IMR-90 (cell line): ENCODE measurements at regions of chr3 and their contacts with region 1.

Region 1: GRCh38 chr3:128623762-128624176 is 26.8 kb downstream of the RPN1 start:
- DNase-seq: peak; percentile 85
- ATAC-seq: peak; percentile 47
- H3K4me3 ChIP-seq: no peak overlapping the region
- H3K27ac ChIP-seq: no peak overlapping the region
- H3K4me1 ChIP-seq: peaks cover 6% of the 10 kb centered on the region
- H3K27me3 ChIP-seq: no peaks in the 10 kb centered on the region
- CTCF ChIP-seq: no peak
- POLR2A ChIP-seq: no peak
- RAD21 ChIP-seq: no peak

Region 2: DNA sequence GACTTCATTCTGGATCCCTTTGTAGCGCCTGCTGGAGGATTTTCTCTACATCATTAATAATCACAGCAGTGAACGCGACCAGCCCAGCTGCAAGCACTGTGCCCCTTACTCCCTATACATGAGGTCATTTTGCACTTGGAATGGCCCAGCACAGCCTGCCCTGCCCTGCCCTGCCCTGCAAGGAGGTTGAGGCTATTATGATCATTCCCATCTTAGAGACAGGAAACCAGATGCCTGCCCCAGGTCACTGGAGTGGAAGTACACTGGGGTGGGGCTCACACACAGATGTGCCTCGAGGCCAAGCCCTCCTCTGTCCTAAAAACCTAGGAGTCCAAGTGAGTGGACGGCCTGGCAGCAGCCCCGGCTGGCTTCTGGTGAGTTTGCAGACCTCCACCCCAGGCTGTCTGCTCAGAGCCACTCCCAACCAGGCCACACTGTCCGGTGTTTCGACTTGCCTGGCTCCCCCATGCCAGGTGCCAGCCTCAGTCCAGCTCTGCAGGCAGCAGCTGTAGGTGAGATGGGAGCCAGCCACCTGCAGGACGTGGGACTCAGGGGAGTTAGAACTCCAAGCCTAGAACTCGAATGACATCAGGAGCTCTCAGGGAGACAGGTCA is 601.9 kb before region 1 on chr3:
- CTCF ChIA-PET with region 1: no interaction called
- POLR2A ChIA-PET with region 1: no interaction called
- dilution Hi-C with region 1: no loop called
- in situ Hi-C with region 1: no loop called
- intact Hi-C with region 1: no loop called
- DNase-seq: no peak
- ATAC-seq: no peak
- H3K4me3 ChIP-seq: no peak overlapping the region
- H3K27ac ChIP-seq: no peak overlapping the region
- H3K4me1 ChIP-seq: no peaks in the 10 kb centered on the region
- H3K27me3 ChIP-seq: peaks cover 27% of the 10 kb centered on the region
- CTCF ChIP-seq: no peak
- POLR2A ChIP-seq: no peak
- RAD21 ChIP-seq: no peak

Region 3: DNA sequence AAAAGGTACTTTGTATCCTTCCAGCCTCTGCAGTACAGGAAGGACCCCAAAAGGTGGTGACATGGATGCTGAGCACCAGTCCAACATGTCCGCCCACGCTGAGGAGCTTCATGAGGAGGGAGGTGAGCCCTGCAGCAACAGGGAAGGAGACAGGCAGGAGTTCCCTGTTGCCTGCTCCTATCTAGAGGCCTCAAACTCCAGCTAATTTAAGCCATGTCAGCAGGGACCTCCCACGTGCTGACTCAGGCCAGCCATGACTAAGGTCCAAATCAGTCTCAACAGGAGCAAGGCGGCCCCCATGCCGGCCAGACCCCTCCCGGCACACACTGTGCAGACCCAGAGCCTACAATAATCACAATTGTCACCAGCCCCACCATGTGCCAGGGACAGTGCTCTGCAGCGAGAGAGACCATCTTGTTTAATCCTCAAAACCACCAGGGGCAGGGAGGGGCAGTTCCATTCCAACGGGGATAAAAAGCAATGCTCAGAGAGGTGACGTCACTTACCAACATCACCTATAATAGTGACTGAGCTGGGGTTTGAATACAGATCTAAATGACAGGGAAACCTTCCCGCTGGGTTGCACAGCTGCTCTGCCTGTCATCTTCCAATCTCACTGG is 76.3 kb before region 1 on chr3:
- CTCF ChIA-PET with region 1: no interaction called
- POLR2A ChIA-PET with region 1: no interaction called
- dilution Hi-C with region 1: no loop called
- in situ Hi-C with region 1: no loop called
- intact Hi-C with region 1: no loop called
- DNase-seq: peak; percentile 67
- ATAC-seq: peak; percentile 65
- H3K4me3 ChIP-seq: no peak overlapping the region
- H3K27ac ChIP-seq: no peak overlapping the region; the same call in 1 of the 2 replicates
- H3K4me1 ChIP-seq: peaks cover 22% of the 10 kb centered on the region
- H3K27me3 ChIP-seq: peaks cover 3% of the 10 kb centered on the region; the same call in 1 of the 2 replicates
- CTCF ChIP-seq: no peak
- POLR2A ChIP-seq: no peak
- RAD21 ChIP-seq: no peak

Region 4: GRCh38 chr3:128663151-128663550 is 39.4 kb after region 1 on chr3:
- CTCF ChIA-PET with region 1: interaction called, 4 read pairs
- POLR2A ChIA-PET with region 1: interaction called, 4 read pairs
- dilution Hi-C with region 1: no loop called
- in situ Hi-C with region 1: no loop called
- intact Hi-C with region 1: loop called (anchors 1 kb)
- DNase-seq: no peak
- ATAC-seq: no peak
- H3K4me3 ChIP-seq: no peak overlapping the region
- H3K27ac ChIP-seq: no peak overlapping the region
- H3K4me1 ChIP-seq: no peaks in the 10 kb centered on the region
- H3K27me3 ChIP-seq: peaks cover 9% of the 10 kb centered on the region
- CTCF ChIP-seq: no peak
- POLR2A ChIP-seq: no peak
- RAD21 ChIP-seq: no peak